ENCODE measurements at regions of chr12 and their contacts with region 1.

Region 1: DNA sequence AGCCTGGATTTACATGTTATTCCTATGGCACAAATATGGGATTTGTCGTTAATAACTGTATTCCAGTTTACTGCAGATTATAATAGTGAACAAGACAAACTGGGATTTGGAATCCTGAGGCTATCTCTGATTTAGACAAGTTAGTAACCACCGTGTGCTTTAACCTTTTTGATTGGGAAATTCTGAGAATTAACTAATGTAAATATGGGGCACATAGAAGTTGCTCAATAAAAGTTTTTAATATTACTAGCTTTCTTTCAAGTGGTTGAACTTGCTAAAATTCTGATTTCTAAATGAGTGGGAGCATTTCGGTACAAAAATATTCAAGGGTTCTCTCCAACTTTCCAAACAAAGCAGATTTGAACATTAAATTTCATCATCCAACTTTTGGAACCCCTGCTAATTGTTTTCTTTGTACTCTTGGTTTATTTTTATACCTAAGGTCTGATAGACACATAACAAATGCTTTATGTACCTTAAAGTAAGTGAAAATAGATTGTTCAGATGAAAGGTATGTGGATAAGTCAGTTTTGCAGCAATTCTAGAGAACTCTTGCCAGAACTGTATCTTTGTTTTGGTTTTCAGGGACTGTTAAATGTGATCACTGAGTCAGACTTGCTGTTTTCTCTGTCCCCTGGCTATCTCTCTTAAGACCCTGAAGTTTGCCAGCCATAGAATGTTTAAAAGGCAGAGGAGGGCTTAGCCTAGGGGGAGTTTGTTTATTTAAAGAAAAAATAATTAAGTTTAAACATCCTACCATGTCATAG is 57.5 kb downstream of the FRS2 start:
- DNase-seq: no peak
- ATAC-seq: no peak
- H3K4me3 ChIP-seq: no peak overlapping the region
- H3K27ac ChIP-seq: no peak overlapping the region
- H3K4me1 ChIP-seq: peaks cover 5% of the 10 kb centered on the region
- H3K27me3 ChIP-seq: no peaks in the 10 kb centered on the region

Region 2: DNA sequence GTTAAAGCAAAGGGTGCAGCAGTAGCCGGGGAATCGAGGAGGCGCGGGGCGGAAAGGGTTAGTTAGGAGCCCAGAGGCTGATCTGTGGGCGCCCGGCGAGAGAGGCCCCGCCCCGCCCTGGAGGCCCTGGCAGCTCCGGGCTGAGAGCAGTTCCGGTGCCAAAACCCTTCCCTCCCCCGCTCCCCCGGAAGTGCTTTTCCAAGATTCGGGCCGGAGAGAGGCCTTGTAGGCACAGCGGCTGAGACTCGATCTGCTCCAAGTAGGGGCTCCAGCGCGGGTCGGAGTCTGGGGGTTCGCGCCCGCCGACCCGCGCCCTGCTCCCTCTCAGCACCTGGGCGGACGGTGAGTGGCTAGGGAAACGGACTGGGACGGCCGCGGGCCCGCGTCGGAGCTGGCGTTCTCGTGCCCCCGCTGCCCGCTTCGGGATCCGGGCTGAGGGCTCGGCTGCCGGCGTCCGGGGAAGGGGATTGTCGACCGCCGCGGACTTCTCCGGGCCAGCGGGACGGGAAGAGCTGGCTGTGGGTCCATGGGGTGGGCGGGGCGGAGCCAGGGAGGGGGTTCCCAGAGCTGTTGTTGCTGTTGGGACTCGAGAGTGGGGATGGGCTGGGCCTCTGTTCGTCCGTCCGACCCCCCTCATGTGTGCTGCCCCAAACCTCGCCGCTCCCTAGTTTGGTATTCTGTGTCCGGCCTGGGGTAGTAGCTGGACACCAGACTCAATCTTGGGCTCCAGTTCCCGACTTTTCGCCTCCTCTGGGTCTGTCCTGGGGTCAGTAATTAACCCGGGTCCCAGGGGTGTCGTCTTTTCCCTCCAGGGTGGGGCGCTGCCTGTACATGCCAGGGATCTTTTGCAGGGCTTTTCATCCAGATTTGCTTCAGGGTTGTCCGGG is 57.3 kb before region 1 on chr12 and contains the start of gene FRS2:
- intact Hi-C with region 1: loop called in 1 of 4 experiments (anchors 10 kb)
- DNase-seq: peak; percentile 92 to 97 (median 96)
- ATAC-seq: peak; percentile 98 to 99
- H3K4me3 ChIP-seq: peak within 1 kb of the TSS; percentile 84
- H3K27ac ChIP-seq: peak within 1 kb of the TSS; percentile 56
- H3K4me1 ChIP-seq: peaks cover 6% of the 10 kb centered on the region
- H3K27me3 ChIP-seq: no peaks in the 10 kb centered on the region
- total RNA-seq, gene FRS2: 26.2 to 38.6 (median 29.7) TPM